HCT116 (cell line): ENCODE measurements at regions of chr3 and their contacts with region 1.

Region 1: DNA sequence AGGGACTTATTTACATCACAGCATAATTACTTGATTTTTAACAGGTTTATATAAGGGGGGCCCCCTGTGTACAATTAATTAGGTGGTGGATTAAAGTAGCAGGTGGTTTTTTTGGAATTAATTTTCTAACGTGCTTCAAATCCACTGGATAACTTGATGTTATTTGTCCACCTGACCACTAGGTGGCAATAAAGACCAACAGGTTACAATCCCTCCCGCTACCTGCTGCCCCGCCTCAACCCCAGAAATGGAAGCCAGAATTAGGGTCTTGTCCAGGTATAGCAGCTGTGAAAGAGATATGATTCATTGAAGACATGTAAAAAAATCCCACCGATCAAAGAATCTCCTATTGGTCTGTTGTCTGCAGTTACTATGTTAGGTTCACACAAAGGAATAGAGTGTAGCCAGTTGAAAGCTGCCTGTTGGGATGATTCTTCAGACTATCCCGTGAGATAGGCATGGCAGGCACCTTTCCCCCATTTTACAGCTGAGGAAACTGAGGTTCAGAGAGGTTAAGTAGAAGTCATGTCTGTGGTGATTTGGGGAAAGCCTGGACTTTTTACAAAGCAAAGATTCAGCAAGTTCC is 44.0 kb downstream of the MFSD1 start:
- DNase-seq: peak; percentile 27
- ATAC-seq: peak; percentile 85
- H3K4me3 ChIP-seq: no peak overlapping the region
- H3K27ac ChIP-seq: no peak overlapping the region
- H3K4me1 ChIP-seq: no peaks in the 10 kb centered on the region
- H3K27me3 ChIP-seq: no peaks in the 10 kb centered on the region
- CTCF ChIP-seq: peak; percentile 58 to 77 (median 68); a peak in 4 of 6 replicates
- POLR2A ChIP-seq: no peak
- RAD21 ChIP-seq: peak; percentile 87

Region 2: GRCh38 chr3:159102001-159102400 is 256.1 kb after region 1 on chr3:
- CTCF ChIA-PET with region 1: no interaction called
- POLR2A ChIA-PET with region 1: no interaction called
- RAD21 ChIA-PET with region 1: no interaction called
- intact Hi-C with region 1: no loop called
- DNase-seq: no peak
- ATAC-seq: no peak
- H3K4me3 ChIP-seq: no peak overlapping the region
- H3K27ac ChIP-seq: no peak overlapping the region
- H3K4me1 ChIP-seq: no peaks in the 10 kb centered on the region
- H3K27me3 ChIP-seq: no peaks in the 10 kb centered on the region
- CTCF ChIP-seq: no peak
- POLR2A ChIP-seq: no peak
- RAD21 ChIP-seq: no peak

Region 3: DNA sequence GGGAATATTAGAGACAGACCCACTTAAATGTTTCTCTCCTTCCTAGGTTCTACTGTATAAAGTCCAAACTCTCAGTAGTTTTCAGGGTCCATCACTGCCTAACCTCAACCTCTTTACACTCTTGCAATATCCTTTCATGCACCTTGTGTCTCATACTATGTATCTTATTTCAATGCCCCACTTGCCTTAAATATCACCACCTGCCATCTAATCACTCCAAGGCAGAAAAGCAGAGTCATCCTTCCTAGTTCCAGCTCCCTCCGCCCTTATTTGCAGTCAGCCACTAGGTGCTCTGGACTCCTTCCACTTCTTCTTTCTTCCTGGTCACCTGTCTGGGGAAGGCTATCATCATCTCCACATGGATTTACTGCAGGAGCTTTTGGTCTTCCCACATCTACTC is 278.0 kb after region 1 on chr3:
- CTCF ChIA-PET with region 1: no interaction called
- POLR2A ChIA-PET with region 1: no interaction called
- RAD21 ChIA-PET with region 1: no interaction called
- intact Hi-C with region 1: loop called (anchors 5 kb)
- DNase-seq: no peak
- ATAC-seq: no peak
- H3K4me3 ChIP-seq: no peak overlapping the region
- H3K27ac ChIP-seq: no peak overlapping the region
- H3K4me1 ChIP-seq: peaks cover 0 to 3% of the 10 kb centered on the region in 2 experiments; a peak in 1 of 4 replicates
- H3K27me3 ChIP-seq: no peaks in the 10 kb centered on the region
- CTCF ChIP-seq: no peak
- POLR2A ChIP-seq: no peak
- RAD21 ChIP-seq: no peak